ENCODE measurements at regions of chr11 and their contacts with region 1.

Region 1: DNA sequence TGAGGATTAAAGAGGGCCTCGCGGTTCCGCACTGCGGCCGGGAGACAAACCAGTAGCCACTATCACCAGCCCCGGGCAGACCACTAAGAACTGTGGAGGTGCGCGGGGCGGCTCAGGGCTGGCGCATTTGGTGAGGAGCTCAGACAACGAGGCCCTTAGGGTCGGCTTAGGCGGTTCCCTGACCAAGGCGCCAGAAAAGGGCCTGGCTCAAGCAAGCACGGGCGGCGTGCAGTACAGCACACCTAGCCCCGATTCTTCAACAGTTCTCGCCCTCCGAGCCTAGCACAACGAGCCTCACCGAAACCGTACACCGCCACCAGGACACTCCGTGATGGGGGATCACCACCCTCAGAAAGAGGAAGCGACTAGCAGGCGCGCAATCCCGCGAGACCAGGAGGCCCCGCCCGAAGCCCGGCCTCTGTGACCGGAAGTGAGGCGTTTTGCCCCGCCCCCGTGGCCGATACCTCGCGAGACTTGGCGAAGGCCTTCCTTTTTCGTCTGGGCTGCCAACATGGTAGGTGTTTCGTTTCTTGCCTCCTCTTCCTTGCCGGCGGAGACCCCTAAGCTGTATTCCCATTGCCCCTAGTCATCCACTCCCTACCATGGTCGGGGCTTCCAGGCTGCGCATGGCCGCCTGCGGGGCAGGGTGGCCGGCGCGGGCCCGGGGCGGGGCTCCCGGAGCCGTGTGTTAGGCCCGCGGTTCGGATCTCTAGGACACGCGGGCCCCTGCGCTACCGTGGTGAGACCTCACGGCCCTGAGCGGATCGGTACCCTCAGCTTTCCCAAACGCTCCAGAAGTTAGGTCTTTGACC is at the starts of genes RPL27A and TRIM66:
- DNase-seq: peak; percentile 84 to 97
- ATAC-seq: peak; percentile 97 to 98
- H3K4me3 ChIP-seq: peak within 1 kb of the TSS; percentile 76
- H3K27ac ChIP-seq: peak within 1 kb of the TSS; percentile 95 to 98
- H3K4me1 ChIP-seq: peaks cover 34% of the 10 kb centered on the region
- CTCF ChIP-seq: no peak
- EP300 ChIP-seq: no peak
- POLR2A ChIP-seq: peak; percentile 98
- RAD21 ChIP-seq: peak in 1 of 2 experiments; percentile 12; a peak in 2 of 5 replicates
- polyA plus RNA-seq, gene RPL27A: 798 and 804 TPM in 2 replicates
- polyA plus RNA-seq, gene TRIM66: 7.7 and 9.8 TPM in 2 replicates

Region 2: DNA sequence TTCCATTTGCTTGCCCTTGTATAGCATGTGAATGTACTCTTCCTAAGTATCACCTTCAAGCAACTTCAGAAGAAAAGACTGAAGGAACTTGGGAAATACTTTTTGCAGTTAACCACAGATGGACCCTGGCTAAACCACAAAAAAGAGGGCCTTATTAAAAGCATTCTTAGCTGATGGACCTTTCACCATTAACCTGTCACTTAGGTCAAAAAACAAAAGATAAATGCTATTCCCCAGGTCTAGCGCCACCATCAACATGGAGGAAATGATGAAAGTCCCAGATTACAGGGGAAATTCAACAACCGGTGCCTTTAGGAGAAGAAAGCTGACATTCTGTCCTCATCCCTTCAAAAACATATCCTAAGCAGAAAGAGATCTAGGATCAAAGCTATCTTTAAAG is 118.0 kb before region 1 on chr11:
- CTCF ChIA-PET with region 1: no interaction called
- POLR2A ChIA-PET with region 1: no interaction called
- DNase-seq: no peak
- ATAC-seq: no peak
- H3K4me3 ChIP-seq: no peak overlapping the region
- H3K27ac ChIP-seq: no peak overlapping the region
- H3K4me1 ChIP-seq: peaks cover 8% of the 10 kb centered on the region; the same call in 2 of the 3 replicates
- CTCF ChIP-seq: no peak
- EP300 ChIP-seq: no peak
- POLR2A ChIP-seq: no peak
- RAD21 ChIP-seq: no peak

Region 3: GRCh38 chr11:8593935-8594909 is 88.3 kb before region 1 on chr11 and contains the start of gene STK33:
- CTCF ChIA-PET with region 1: no interaction called
- POLR2A ChIA-PET with region 1: interaction called, 10 read pairs
- DNase-seq: peak; percentile 50 to 53
- ATAC-seq: peak; percentile 85 to 87
- H3K4me3 ChIP-seq: peak within 1 kb of the TSS; percentile 61
- H3K27ac ChIP-seq: peak within 1 kb of the TSS; percentile 70 to 89
- H3K4me1 ChIP-seq: peaks cover 20% of the 10 kb centered on the region
- CTCF ChIP-seq: no peak
- EP300 ChIP-seq: no peak
- POLR2A ChIP-seq: peak; percentile 21; the same call in 1 of the 2 replicates
- RAD21 ChIP-seq: no peak
- polyA plus RNA-seq, gene STK33: 4.4 and 5.8 TPM in 2 replicates

Region 4: GRCh38 chr11:8604078-8604723 is 78.3 kb before region 1 on chr11:
- CTCF ChIA-PET with region 1: interaction called, 3 read pairs
- POLR2A ChIA-PET with region 1: interaction called, 12 read pairs
- DNase-seq: peak; percentile 64 to 97
- ATAC-seq: peak; percentile 94
- H3K4me3 ChIP-seq: no peak overlapping the region
- H3K27ac ChIP-seq: peak overlapping the region; percentile 64 to 78
- H3K4me1 ChIP-seq: peaks cover 56% of the 10 kb centered on the region
- CTCF ChIP-seq: peak; percentile 74
- EP300 ChIP-seq: peak; percentile 61 to 74; a peak in 2 of 5 replicates
- POLR2A ChIP-seq: no peak
- RAD21 ChIP-seq: peak; percentile 51 to 54

Region 5: DNA sequence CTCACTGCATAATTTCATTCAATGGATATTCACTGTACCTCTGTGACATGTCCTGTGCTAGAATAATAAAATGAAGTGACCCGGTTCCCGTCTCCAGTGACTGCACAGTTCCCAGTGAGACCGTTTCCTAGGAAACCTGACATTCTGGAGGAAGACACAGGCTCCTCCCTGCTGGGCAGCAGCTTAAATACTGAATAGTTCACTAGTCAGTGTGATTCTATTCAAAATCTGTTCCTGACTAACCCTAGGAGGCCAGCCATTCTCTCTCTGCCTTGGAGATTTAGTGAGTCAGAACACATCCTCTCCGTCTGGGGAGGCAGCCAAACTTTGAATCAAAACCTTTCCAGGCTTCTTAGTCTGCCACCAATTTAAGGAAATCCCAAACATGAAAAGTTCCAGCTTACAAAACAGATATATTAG is 11.3 kb before region 1 on chr11:
- CTCF ChIA-PET with region 1: interaction called, 5 read pairs
- POLR2A ChIA-PET with region 1: interaction called, 15 read pairs
- DNase-seq: peak in 1 of 2 experiments; percentile 48
- ATAC-seq: peak; percentile 90 to 96
- H3K4me3 ChIP-seq: no peak overlapping the region
- H3K27ac ChIP-seq: peak overlapping the region; percentile 54 to 74; a peak in 5 of 6 replicates
- H3K4me1 ChIP-seq: peaks cover 16% of the 10 kb centered on the region
- CTCF ChIP-seq: no peak
- EP300 ChIP-seq: no peak
- POLR2A ChIP-seq: no peak
- RAD21 ChIP-seq: no peak

Region 6: DNA sequence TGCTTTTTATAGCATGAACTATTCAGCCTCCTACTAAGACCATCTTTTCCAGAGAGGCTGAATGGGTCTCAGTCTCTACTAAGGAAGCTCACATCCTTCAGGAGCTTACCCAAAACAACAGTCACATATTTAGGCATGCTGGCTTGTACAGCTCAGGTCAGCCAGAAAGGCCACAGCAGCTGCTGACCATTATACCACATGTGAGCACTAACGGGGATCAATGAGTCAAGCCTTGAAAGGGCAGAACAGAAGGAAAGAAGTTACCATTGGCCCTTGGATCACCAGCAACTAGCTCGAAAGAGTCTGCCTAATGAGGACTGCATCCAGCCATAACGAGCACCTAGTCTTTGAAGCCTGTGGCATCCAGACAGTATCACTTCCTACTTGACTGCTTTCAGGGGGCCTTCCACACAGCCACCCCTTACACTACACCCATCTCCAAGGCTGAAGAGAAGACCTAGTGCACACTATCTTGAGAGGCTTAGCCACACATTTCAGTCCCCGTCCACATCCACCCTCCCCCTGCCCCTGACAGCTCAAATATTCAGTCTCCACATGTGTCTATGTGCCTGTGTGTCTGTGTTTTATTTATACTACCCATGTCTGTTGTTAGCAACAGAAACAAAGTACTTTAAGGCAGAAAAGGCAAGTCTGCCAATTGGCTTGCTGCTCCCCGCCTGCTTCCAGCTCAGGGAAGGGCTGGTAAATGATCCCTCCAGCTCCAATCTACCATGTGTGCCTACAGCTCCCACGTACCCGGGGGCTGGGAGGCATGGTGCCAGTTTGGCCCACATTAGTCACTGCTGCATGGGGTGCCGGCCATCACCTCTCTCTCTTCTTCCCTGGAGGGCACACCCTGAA is 95.6 kb after region 1 on chr11:
- CTCF ChIA-PET with region 1: no interaction called
- POLR2A ChIA-PET with region 1: no interaction called
- DNase-seq: no peak
- ATAC-seq: peak in 1 of 2 experiments; percentile 34; a peak in 2 of 6 replicates
- H3K4me3 ChIP-seq: no peak overlapping the region
- H3K27ac ChIP-seq: no peak overlapping the region
- H3K4me1 ChIP-seq: no peaks in the 10 kb centered on the region
- CTCF ChIP-seq: no peak
- EP300 ChIP-seq: no peak
- POLR2A ChIP-seq: no peak
- RAD21 ChIP-seq: no peak

Region 7: GRCh38 chr11:8870411-8871170 is 188.1 kb after region 1 on chr11:
- CTCF ChIA-PET with region 1: no interaction called
- POLR2A ChIA-PET with region 1: interaction called, 17 read pairs
- DNase-seq: peak; percentile 58 to 86
- ATAC-seq: peak; percentile 83 to 89
- H3K4me3 ChIP-seq: peak overlapping the region; percentile 94
- H3K27ac ChIP-seq: peak overlapping the region; percentile 95 to 96
- H3K4me1 ChIP-seq: peaks cover 14% of the 10 kb centered on the region; the same call in 2 of the 3 replicates
- CTCF ChIP-seq: no peak; the same call in 2 of the 3 replicates
- EP300 ChIP-seq: no peak
- POLR2A ChIP-seq: peak; percentile 38
- RAD21 ChIP-seq: peak; percentile 10 to 51; a peak in 2 of 5 replicates

Measured in A549 (cell line).